CD4-positive, alpha-beta T cell (primary cell): ENCODE measurements at regions of chr2 and their contacts with region 1.

Region 1: DNA sequence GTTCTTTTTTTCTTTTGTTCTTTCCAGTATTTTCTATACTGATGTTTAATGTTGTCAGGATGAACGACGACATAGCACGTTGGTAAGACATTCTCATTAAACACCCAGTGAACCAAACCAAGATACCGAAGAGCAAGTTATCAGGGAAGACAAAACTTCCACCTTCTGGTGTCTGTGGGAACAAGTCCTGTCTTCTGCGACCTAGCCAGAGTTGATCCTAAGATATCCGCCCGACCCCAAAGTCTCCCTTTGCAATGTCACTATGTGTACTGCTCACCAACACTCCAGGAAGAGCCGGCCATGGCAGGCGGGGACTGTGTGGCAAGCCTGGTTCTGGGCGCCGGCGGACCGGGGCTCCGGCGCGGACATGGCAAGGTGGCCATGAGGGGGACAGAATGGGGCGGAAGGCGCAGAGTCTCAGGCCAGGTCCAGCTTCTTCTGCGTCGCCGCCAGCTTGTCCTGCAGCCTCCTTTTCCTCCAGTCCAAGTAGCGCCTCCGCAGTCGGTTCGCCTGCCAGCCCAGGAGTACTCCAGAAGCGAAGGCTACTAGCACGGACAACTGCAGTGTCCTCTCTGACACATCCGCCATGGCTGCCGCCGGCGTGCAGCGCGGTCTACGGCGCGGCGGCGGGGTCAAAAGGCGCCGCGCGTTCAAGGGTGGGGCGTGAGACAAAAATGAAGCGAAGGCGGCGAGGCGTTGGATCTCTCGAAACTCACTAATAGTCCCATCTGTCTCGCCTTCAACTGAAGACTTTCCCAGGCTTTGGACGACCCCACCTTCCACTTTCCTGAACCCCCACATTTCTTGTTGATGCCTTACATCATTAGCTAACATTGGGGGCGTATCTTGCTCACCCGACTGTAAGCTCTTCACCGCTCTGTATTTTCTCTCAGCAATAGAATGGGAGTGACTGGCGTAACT is at the start of gene MTLN:
- DNase-seq: peak; percentile 48 to 86 (median 62)
- ATAC-seq: peak; percentile 92
- H3K4me3 ChIP-seq: peak within 1 kb of the TSS; percentile 100
- H3K4me3 Mint-ChIP-seq: peak within 1 kb of the TSS; percentile 97
- H3K27ac ChIP-seq: peak within 1 kb of the TSS; percentile 71 to 77
- H3K27ac Mint-ChIP-seq: peak within 1 kb of the TSS; percentile 91
- H3K4me1 ChIP-seq: peaks cover 8% of the 10 kb centered on the region
- H3K4me1 Mint-ChIP-seq: peaks cover 34% of the 10 kb centered on the region
- H3K27me3 ChIP-seq: peaks cover 8 to 15% of the 10 kb centered on the region in 2 experiments
- H3K27me3 Mint-ChIP-seq: peaks cover 27% of the 10 kb centered on the region
- CTCF ChIP-seq: no peak
- total RNA-seq, gene MTLN: 8.7 to 9.8 TPM

Region 2: GRCh38 chr2:108448678-108449493 is 1763.3 kb before region 1 on chr2 and contains the start of gene GCC2:
- CTCF ChIA-PET with region 1: no interaction called
- POLR2A ChIA-PET with region 1: no interaction called
- intact Hi-C with region 1: loop called in 1 of 2 experiments (anchors 5 kb)
- DNase-seq: peak; percentile 94 to 98 (median 96)
- ATAC-seq: peak; percentile 93
- H3K4me3 ChIP-seq: peak within 1 kb of the TSS; percentile 88
- H3K4me3 Mint-ChIP-seq: peak within 1 kb of the TSS; percentile 97
- H3K27ac ChIP-seq: peak within 1 kb of the TSS; percentile 88 to 97
- H3K27ac Mint-ChIP-seq: peak within 1 kb of the TSS; percentile 97
- H3K4me1 ChIP-seq: peaks cover 24% of the 10 kb centered on the region
- H3K4me1 Mint-ChIP-seq: peaks cover 50% of the 10 kb centered on the region
- H3K27me3 ChIP-seq: no peaks in the 10 kb centered on the region
- H3K27me3 Mint-ChIP-seq: no peaks in the 10 kb centered on the region
- CTCF ChIP-seq: no peak
- total RNA-seq, gene GCC2: 134 to 141 TPM

Region 3: GRCh38 chr2:109601783-109602182 is 610.4 kb before region 1 on chr2:
- CTCF ChIA-PET with region 1: no interaction called
- POLR2A ChIA-PET with region 1: no interaction called
- intact Hi-C with region 1: no loop called
- DNase-seq: no peak
- ATAC-seq: no peak
- H3K4me3 ChIP-seq: no peak overlapping the region
- H3K4me3 Mint-ChIP-seq: no peak overlapping the region
- H3K27ac ChIP-seq: no peak overlapping the region
- H3K27ac Mint-ChIP-seq: no peak overlapping the region
- H3K4me1 ChIP-seq: no peaks in the 10 kb centered on the region
- H3K4me1 Mint-ChIP-seq: no peaks in the 10 kb centered on the region
- H3K27me3 ChIP-seq: peaks cover 0 to 7% of the 10 kb centered on the region in 2 experiments
- H3K27me3 Mint-ChIP-seq: peaks cover 36% of the 10 kb centered on the region
- CTCF ChIP-seq: no peak